ENCODE measurements at regions of chr9 and their contacts with region 1.

Region 1: DNA sequence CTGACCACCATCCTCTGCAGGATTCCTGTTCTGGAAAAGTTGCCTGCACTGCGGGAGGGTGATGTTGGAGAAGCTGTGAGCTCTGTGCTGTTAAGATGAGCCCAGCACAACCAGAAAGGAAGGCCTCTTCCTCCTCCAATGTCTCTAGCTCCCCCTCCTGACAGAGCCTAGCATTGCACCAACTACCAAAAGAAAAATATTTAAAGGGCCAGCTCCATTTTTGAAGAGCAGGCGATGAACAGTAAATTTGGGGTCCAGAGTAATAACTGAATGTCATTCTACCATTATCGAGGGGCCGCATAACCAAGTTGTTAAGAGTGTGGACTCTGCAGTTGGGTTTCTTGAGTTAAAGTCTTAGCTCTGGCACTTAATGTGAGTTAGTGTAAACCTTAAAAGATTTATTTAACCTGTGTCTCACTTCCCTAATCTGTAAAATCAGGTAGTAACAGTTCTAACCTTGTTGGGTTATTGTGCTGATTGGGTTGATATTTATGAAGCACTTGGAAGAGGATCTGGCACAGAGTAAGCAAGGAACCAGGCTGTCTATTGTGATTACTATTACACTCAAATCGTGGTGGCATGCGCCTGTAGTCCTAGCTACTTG is 3.9 kb downstream of the TEX53 start:
- DNase-seq: peak; percentile 86
- H3K4me3 Mint-ChIP-seq: no peak overlapping the region
- H3K27ac Mint-ChIP-seq: no peak overlapping the region
- H3K4me1 Mint-ChIP-seq: peaks cover 21% of the 10 kb centered on the region
- H3K27me3 Mint-ChIP-seq: no peaks in the 10 kb centered on the region

Region 2: GRCh38 chr9:114174876-114175771 is 478.5 kb before region 1 on chr9:
- CTCF ChIA-PET with region 1: no interaction called
- POLR2A ChIA-PET with region 1: no interaction called
- intact Hi-C with region 1: no loop called
- DNase-seq: no peak
- H3K4me3 Mint-ChIP-seq: no peak overlapping the region
- H3K27ac Mint-ChIP-seq: no peak overlapping the region
- H3K4me1 Mint-ChIP-seq: no peaks in the 10 kb centered on the region
- H3K27me3 Mint-ChIP-seq: no peaks in the 10 kb centered on the region

Region 3: GRCh38 chr9:114339130-114339908 is 314.3 kb before region 1 on chr9:
- CTCF ChIA-PET with region 1: interaction called, 10 read pairs
- POLR2A ChIA-PET with region 1: no interaction called
- intact Hi-C with region 1: no loop called
- DNase-seq: peak; percentile 71
- H3K4me3 Mint-ChIP-seq: no peak overlapping the region
- H3K27ac Mint-ChIP-seq: peak overlapping the region; percentile 64
- H3K4me1 Mint-ChIP-seq: peaks cover 3% of the 10 kb centered on the region
- H3K27me3 Mint-ChIP-seq: no peaks in the 10 kb centered on the region

Region 4: DNA sequence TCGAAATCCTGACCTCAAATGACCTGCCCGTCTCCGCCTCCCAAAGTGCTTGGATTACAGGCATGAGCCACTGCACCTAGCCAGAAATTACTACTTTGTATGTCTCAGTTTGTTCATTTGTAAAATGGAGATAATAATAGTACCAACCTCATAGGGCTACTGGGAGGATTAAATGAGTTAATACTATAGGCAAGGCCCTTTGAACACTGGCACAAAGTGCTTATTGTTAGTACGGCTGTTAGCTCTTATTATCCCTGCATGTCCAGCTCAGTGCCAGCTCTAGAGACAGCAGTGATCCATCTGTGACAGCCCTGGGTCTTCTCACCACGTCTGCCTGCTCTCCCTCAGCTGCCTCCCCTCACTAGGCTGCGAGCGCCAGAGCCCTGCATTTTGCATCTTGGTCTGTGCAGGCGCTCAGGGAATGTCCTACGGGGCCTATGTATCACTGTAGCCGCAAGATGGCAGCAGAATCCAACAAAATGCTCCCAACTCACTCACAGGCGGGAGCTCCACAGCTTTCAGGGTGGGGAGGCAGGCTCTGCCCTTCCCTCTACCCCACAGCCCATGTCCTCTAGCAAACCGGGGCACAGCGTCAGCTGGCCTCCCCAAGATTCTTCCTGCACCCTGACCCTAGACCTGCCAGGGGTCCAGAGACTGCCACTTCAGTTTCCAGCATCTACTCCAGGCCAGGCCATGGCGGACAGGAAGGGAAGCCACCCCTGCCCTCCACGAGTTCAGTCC is 248.2 kb before region 1 on chr9:
- CTCF ChIA-PET with region 1: interaction called, 329 read pairs
- POLR2A ChIA-PET with region 1: interaction called, 4 read pairs
- intact Hi-C with region 1: loop called (anchors 1 kb)
- DNase-seq: peak; percentile 87
- H3K4me3 Mint-ChIP-seq: no peak overlapping the region
- H3K27ac Mint-ChIP-seq: peak overlapping the region; percentile 3
- H3K4me1 Mint-ChIP-seq: peaks cover 4% of the 10 kb centered on the region
- H3K27me3 Mint-ChIP-seq: no peaks in the 10 kb centered on the region

Region 5: GRCh38 chr9:114487607-114488300 is 165.9 kb before region 1 on chr9:
- CTCF ChIA-PET with region 1: interaction called, 97 read pairs
- POLR2A ChIA-PET with region 1: no interaction called
- intact Hi-C with region 1: loop called (anchors 1 kb)
- DNase-seq: peak; percentile 69
- H3K4me3 Mint-ChIP-seq: no peak overlapping the region
- H3K27ac Mint-ChIP-seq: no peak overlapping the region
- H3K4me1 Mint-ChIP-seq: peaks cover 26% of the 10 kb centered on the region
- H3K27me3 Mint-ChIP-seq: peaks cover 1% of the 10 kb centered on the region

Region 6: GRCh38 chr9:114538241-114538640 is 115.4 kb before region 1 on chr9:
- CTCF ChIA-PET with region 1: interaction called, 13 read pairs
- POLR2A ChIA-PET with region 1: no interaction called
- intact Hi-C with region 1: no loop called
- DNase-seq: peak; percentile 38
- H3K4me3 Mint-ChIP-seq: no peak overlapping the region
- H3K27ac Mint-ChIP-seq: no peak overlapping the region
- H3K4me1 Mint-ChIP-seq: peaks cover 6% of the 10 kb centered on the region
- H3K27me3 Mint-ChIP-seq: peaks cover 3% of the 10 kb centered on the region

Region 7: DNA sequence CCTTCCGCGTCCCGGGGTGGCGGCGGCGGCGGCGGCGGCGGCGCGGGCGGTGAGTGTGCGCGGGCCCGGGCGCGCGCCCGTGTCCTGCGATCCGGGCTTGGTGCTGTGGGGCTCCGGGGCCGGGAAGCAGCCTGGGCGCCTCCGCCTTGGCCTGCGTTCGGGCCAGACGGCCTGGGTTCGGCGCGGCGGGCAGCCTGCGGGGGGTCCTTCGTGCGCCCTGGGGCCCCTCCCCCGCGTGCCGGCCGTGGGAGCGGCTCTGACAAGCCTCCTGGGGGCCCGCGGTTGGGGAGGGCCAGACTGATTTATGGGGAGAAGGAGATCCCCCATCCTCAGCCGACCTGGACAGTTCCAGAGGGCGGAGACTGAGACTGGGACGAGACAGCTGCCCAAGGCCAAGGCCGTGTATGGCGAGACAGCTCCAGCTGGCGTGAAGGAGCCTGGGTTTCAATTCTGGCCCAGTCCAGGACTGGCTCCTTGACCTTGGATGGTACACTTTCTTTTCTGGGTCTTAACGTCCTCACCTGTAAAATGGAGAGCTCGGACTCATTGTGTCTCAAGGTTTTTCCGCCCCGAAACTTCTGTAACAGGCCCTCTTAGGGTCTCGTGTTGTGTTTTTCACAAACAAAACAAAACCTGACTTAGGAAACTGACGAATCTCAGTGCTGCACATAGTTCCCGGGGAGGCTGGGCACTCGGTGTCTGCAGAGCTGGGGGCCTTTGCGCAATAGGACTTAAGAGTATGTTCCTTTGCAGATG is 42.0 kb before region 1 on chr9:
- CTCF ChIA-PET with region 1: interaction called, 11 read pairs
- POLR2A ChIA-PET with region 1: interaction called, 4 read pairs
- intact Hi-C with region 1: loop called (anchors 2 kb)
- DNase-seq: peak; percentile 54
- H3K4me3 Mint-ChIP-seq: peak overlapping the region; percentile 83
- H3K27ac Mint-ChIP-seq: peak overlapping the region; percentile 65
- H3K4me1 Mint-ChIP-seq: peaks cover 47% of the 10 kb centered on the region
- H3K27me3 Mint-ChIP-seq: no peaks in the 10 kb centered on the region

Region 8: GRCh38 chr9:114754581-114754980 is 100.9 kb after region 1 on chr9:
- CTCF ChIA-PET with region 1: no interaction called
- POLR2A ChIA-PET with region 1: no interaction called
- intact Hi-C with region 1: no loop called
- DNase-seq: no peak
- H3K4me3 Mint-ChIP-seq: no peak overlapping the region
- H3K27ac Mint-ChIP-seq: no peak overlapping the region
- H3K4me1 Mint-ChIP-seq: peaks cover 6% of the 10 kb centered on the region
- H3K27me3 Mint-ChIP-seq: no peaks in the 10 kb centered on the region